K562 (cell line): ENCODE measurements at regions of chr1 and their contacts with region 1.

Region 1: GRCh38 chr1:156751758-156752757 is 583 bp upstream of the HDGF start:
- DNase-seq: peak; percentile 90 to 98 (median 94)
- ATAC-seq: peak; percentile 78
- H3K4me3 ChIP-seq: peak overlapping the region; percentile 95
- H3K27ac ChIP-seq: peak overlapping the region; percentile 89
- H3K4me1 ChIP-seq: peaks cover 35 to 36% of the 10 kb centered on the region in 2 experiments
- H3K27me3 ChIP-seq: no peaks in the 10 kb centered on the region
- CTCF ChIP-seq: peak in 1 of 3 experiments; percentile 26; a peak in 1 of 6 replicates
- EP300 ChIP-seq: peak; percentile 35; the same call in 1 of the 2 replicates
- POLR2A ChIP-seq: peak; percentile 64
- RAD21 ChIP-seq: no peak

Region 2: DNA sequence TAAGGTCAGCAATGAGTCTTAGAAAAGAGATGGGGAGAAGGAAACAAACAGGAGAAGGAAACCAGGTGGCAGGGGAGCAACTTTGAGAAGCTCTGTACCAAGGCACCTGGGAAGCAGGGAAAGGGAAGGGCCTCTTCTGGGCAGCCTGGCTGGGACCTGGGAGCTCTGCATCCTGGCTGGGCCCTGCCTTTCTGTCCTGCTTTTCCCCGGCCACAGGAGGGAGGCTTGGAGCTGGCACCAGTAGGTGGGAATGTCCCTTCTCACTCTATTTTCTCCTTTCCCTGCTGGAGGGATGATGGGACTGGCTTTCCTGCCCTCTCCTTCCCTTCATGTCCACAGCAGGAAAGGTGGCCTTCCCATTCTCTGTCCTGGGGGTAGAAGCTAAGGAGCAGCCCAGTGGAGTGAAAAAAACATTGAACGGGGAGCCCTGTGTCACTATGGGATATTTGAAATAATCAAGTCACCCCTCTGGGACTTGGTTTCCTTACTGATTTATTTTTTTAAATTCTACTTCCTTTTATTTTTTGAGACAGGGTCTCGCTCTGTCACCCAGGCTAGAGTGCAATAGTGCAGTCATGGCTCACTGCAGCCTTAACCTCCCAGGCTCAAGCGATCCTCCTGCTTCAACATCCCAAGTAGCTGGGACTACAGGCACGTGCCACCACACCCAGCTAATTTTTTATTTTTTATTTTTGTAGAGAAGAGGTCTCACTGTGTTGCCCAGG is 69.7 kb before region 1 on chr1:
- CTCF ChIA-PET with region 1: no interaction called
- POLR2A ChIA-PET with region 1: no interaction called
- in situ Hi-C with region 1: no loop called
- intact Hi-C with region 1: no loop called
- DNase-seq: no peak
- ATAC-seq: no peak
- H3K4me3 ChIP-seq: no peak overlapping the region
- H3K27ac ChIP-seq: no peak overlapping the region
- H3K4me1 ChIP-seq: peaks cover 3 to 7% of the 10 kb centered on the region in 2 experiments
- H3K27me3 ChIP-seq: peaks cover 6 to 11% of the 10 kb centered on the region in 2 experiments; a peak in 4 of 5 replicates
- CTCF ChIP-seq: no peak
- EP300 ChIP-seq: no peak
- POLR2A ChIP-seq: no peak
- RAD21 ChIP-seq: no peak

Region 3: GRCh38 chr1:156767101-156767878 is 15.2 kb after region 1 on chr1 and contains the start of gene PRCC:
- CTCF ChIA-PET with region 1: no interaction called
- POLR2A ChIA-PET with region 1: interaction called, 27 read pairs
- in situ Hi-C with region 1: no loop called
- intact Hi-C with region 1: loop called (anchors 2 kb)
- DNase-seq: peak; percentile 87 to 99 (median 89)
- ATAC-seq: peak; percentile 94
- H3K4me3 ChIP-seq: peak within 1 kb of the TSS; percentile 88
- H3K27ac ChIP-seq: peak within 1 kb of the TSS; percentile 84
- H3K4me1 ChIP-seq: peaks cover 17 to 22% of the 10 kb centered on the region in 2 experiments; a peak in 3 of 5 replicates
- H3K27me3 ChIP-seq: no peaks in the 10 kb centered on the region
- CTCF ChIP-seq: peak in 1 of 3 experiments; percentile 19; a peak in 2 of 6 replicates
- EP300 ChIP-seq: 0 out of 2 replicates have a peak, but pooled peaks have one; percentile 2
- POLR2A ChIP-seq: peak; percentile 79
- RAD21 ChIP-seq: 0 out of 4 replicates have a peak, but pooled peaks of 1 of the 2 experiments have one; percentile 3
- polyA plus RNA-seq, gene PRCC: 23.9 to 25.5 TPM

Region 4: GRCh38 chr1:156772728-156773497 is 20.9 kb after region 1 on chr1:
- CTCF ChIA-PET with region 1: no interaction called
- POLR2A ChIA-PET with region 1: interaction called, 27 read pairs
- in situ Hi-C with region 1: no loop called
- intact Hi-C with region 1: no loop called
- DNase-seq: peak in 1 of 4 experiments; percentile 78
- ATAC-seq: peak; percentile 52
- H3K4me3 ChIP-seq: no peak overlapping the region
- H3K27ac ChIP-seq: peak overlapping the region; percentile 58; the same call in 2 of the 3 replicates
- H3K4me1 ChIP-seq: peaks cover 28 to 43% of the 10 kb centered on the region in 2 experiments
- H3K27me3 ChIP-seq: no peaks in the 10 kb centered on the region
- CTCF ChIP-seq: 0 out of 6 replicates have a peak, but pooled peaks of 1 of the 3 experiments have one; percentile 3
- EP300 ChIP-seq: peak; percentile 59; the same call in 1 of the 2 replicates
- POLR2A ChIP-seq: no peak
- RAD21 ChIP-seq: no peak